ENCODE measurements at regions of chr5 and their contacts with region 1.

Region 1: DNA sequence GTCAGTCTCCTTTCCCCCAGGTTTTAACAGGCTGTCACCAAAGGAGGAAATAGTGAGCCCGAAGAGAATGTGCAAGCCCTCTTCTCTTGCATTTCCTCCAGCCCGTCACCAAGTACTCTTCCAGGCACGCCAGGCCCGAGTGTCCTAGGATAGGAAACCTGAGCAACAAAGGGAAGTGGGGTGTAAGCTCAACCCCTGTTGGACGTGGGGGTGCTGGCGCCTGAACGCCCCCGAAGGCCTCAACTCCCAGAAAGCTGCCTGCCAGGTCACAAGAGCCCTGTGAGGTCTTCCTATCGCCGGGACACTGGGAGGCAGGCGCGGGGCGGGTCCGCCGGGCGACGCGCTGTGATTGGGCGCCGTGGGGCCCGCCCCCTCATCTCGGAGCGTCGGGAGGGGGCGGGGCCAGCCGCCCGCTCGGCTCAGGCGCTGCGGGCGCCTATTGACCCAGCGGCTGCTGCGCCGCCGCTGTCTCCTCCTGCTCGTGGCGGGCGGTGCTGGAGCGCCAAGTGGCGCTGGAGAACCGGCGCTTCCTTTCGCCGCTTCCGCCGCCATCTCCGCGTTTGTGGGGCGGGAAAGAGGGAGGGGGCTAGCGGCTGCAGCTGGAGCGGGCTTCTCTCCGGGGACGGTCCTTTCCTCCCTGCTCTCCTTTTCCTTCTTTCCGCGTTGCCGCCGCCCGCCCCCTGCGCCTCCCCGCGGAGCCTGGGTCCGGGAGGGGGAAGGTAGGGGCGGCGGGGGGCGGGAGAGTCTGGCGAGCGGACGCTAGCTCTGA is 572 bp upstream of the MAN2A1 start:
- DNase-seq: peak; percentile 83
- H3K4me3 Mint-ChIP-seq: peak overlapping the region; percentile 86
- H3K27ac Mint-ChIP-seq: peak overlapping the region; percentile 90
- H3K4me1 Mint-ChIP-seq: peaks cover 42% of the 10 kb centered on the region
- H3K27me3 Mint-ChIP-seq: no peaks in the 10 kb centered on the region

Region 2: GRCh38 chr5:108381954-108382783 is 1307.0 kb before region 1 on chr5 and contains the start of gene FBXL17:
- CTCF ChIA-PET with region 1: no interaction called
- POLR2A ChIA-PET with region 1: interaction called, 14 read pairs
- DNase-seq: peak; percentile 94
- H3K4me3 Mint-ChIP-seq: peak within 1 kb of the TSS; percentile 77
- H3K27ac Mint-ChIP-seq: peak within 1 kb of the TSS; percentile 97
- H3K4me1 Mint-ChIP-seq: peaks cover 27% of the 10 kb centered on the region
- H3K27me3 Mint-ChIP-seq: no peaks in the 10 kb centered on the region
- total RNA-seq, gene FBXL17: 9.2 to 10.0 TPM

Region 3: GRCh38 chr5:109409844-109410388 is 279.2 kb before region 1 on chr5 and contains the start of gene PJA2:
- CTCF ChIA-PET with region 1: interaction called, 7 read pairs
- POLR2A ChIA-PET with region 1: interaction called, 33 read pairs
- DNase-seq: peak; percentile 96
- H3K4me3 Mint-ChIP-seq: peak within 1 kb of the TSS; percentile 100
- H3K27ac Mint-ChIP-seq: peak within 1 kb of the TSS; percentile 100
- H3K4me1 Mint-ChIP-seq: peaks cover 34% of the 10 kb centered on the region
- H3K27me3 Mint-ChIP-seq: no peaks in the 10 kb centered on the region
- total RNA-seq, gene PJA2: 66.1 to 67.1 TPM

Region 4: DNA sequence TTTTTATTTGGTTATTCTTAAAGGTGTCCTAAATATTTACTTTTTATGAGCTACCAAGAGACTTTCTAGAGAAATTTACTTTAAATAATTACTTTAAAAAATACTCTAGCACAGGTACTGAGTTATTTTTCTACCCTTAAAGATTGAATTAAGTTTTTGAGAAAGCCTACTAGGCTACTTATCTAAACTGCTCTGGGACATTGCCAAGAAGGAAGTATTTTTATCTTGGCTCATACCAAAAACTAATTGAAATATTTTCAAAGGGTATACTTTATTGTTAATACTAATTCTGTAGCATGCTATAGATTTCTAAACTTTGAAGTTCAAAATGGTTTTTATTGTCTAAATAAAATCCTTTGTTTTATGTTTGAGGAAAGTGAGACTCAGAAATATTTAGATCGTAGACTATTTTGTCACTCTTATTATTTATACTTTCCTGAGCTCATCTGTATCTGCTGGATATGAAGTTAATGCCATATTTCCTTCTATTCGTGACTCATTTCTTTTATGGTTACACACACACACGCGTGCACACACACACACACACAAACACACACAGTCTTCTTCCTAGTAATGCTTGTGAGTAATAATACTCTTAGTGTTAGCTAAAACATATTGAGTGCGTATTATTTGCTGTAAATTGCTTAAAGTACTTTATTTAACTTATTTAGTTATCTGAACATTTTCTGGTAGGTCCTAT is 90.0 kb after region 1 on chr5:
- CTCF ChIA-PET with region 1: no interaction called
- POLR2A ChIA-PET with region 1: no interaction called
- DNase-seq: no peak
- H3K4me3 Mint-ChIP-seq: no peak overlapping the region
- H3K27ac Mint-ChIP-seq: no peak overlapping the region
- H3K4me1 Mint-ChIP-seq: no peaks in the 10 kb centered on the region
- H3K27me3 Mint-ChIP-seq: no peaks in the 10 kb centered on the region

Region 5: DNA sequence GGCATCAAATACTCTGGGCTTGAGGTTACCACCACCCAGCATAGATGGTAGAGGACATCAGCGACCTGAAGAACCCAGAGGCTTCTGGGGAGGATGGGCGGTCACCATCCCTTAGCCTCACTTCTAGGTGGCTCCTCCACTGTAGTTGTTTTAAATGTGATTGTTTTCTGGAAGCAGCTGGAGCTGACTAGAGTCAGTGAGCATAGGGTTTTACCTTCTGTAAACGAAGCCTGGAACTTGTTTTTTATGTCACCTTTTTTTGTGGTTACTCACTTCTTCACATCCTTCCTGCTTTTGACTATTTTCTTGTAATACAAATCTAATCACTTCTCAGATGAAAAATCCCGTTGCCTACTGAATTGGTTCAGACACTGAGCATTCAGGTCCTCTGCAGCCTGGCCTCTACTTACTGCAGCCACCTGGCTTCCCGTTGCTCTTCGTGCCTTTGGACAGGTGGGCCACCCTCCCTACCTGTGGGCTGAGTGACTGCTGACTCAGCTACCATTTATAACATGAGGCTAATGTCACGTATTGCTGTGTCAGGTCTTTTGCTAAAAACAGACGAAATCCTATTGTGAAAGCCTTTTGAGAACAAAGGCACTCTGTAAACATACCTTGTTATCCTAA is 168.4 kb after region 1 on chr5:
- CTCF ChIA-PET with region 1: no interaction called
- POLR2A ChIA-PET with region 1: interaction called, 18 read pairs
- DNase-seq: peak; percentile 26
- H3K4me3 Mint-ChIP-seq: no peak overlapping the region
- H3K27ac Mint-ChIP-seq: peak overlapping the region; percentile 70
- H3K4me1 Mint-ChIP-seq: peaks cover 33% of the 10 kb centered on the region
- H3K27me3 Mint-ChIP-seq: no peaks in the 10 kb centered on the region

Region 6: DNA sequence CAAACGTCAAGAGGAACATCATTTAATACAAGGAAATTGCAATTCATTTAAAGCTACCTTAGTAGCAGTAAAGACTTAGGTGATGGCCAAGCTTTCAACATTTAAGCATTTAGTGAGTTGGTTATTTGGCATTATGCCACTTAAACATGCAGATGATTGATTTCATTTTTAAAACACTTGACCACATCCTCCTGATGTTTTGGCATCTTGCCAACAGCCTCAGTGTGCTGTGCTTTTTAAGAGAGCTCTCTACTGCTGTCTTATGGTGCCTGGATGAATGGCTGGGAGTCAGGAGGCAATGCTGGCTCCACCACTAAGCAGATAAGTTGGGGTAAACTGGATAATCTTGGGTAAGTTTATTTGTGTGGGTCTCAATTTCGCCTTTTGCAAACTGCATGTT is 365.1 kb after region 1 on chr5:
- CTCF ChIA-PET with region 1: interaction called, 3 read pairs
- POLR2A ChIA-PET with region 1: interaction called, 10 read pairs
- DNase-seq: peak; percentile 75
- H3K4me3 Mint-ChIP-seq: no peak overlapping the region
- H3K27ac Mint-ChIP-seq: peak overlapping the region; percentile 60
- H3K4me1 Mint-ChIP-seq: peaks cover 22% of the 10 kb centered on the region
- H3K27me3 Mint-ChIP-seq: no peaks in the 10 kb centered on the region